Caco-2 (cell line): ENCODE measurements at regions of chr14 and their contacts with region 1.

Region 1: DNA sequence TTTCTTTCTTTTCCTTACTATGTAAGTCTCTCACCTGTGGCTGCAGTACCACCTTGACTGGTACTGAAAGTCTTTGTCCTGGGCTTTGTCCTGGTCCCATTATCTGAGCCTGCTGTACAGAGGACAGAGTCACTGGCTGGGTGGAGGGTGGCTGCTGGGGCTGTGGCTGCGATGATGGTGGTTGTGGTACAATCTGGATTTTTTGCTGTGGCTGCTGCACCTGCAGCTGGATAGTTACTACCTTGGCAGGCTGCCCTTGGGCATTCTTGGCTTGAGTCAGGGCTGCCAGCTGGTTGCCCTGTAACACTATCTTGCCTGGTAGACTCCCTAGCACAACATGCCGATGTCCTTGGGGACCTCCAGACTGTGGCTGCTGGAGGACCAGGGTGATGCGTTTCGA is 27.0 kb downstream of the CHD8 start:
- DNase-seq: no peak
- H3K4me3 ChIP-seq: no peak overlapping the region
- H3K4me3 Mint-ChIP-seq: no peak overlapping the region
- H3K27ac Mint-ChIP-seq: no peak overlapping the region
- H3K4me1 ChIP-seq: no peaks in the 10 kb centered on the region
- H3K4me1 Mint-ChIP-seq: no peaks in the 10 kb centered on the region
- H3K27me3 ChIP-seq: no peaks in the 10 kb centered on the region
- H3K27me3 Mint-ChIP-seq: no peaks in the 10 kb centered on the region
- CTCF ChIP-seq: no peak

Region 2: DNA sequence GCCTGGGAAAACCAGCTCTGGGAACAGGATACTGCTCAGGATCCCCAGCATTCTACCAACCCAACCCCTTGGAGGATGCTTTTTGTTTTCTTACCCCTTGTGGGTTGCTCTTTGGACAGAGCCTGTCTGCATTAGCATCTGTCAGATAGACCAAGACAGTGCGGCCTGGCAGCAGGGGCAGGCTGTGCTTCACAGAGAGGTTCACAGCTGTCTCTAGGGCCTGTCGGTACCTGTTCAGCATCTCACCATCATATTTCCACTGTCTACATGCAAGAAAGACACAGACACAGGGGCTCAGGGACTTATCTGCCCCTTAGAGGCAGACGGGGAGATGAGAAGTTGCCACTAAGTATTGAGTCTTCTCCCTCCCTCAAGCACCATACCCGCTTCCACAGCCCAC is 1037.4 kb before region 1 on chr14:
- CTCF ChIA-PET with region 1: interaction called, 10 read pairs
- POLR2A ChIA-PET with region 1: no interaction called
- intact Hi-C with region 1: no loop called
- DNase-seq: no peak
- H3K4me3 ChIP-seq: no peak overlapping the region
- H3K4me3 Mint-ChIP-seq: no peak overlapping the region
- H3K27ac Mint-ChIP-seq: no peak overlapping the region
- H3K4me1 ChIP-seq: no peaks in the 10 kb centered on the region
- H3K4me1 Mint-ChIP-seq: no peaks in the 10 kb centered on the region
- H3K27me3 ChIP-seq: no peaks in the 10 kb centered on the region
- H3K27me3 Mint-ChIP-seq: no peaks in the 10 kb centered on the region
- CTCF ChIP-seq: no peak

Region 3: GRCh38 chr14:21589317-21589716 is 160.4 kb after region 1 on chr14:
- CTCF ChIA-PET with region 1: no interaction called
- POLR2A ChIA-PET with region 1: no interaction called
- intact Hi-C with region 1: no loop called
- DNase-seq: no peak
- H3K4me3 ChIP-seq: no peak overlapping the region
- H3K4me3 Mint-ChIP-seq: no peak overlapping the region
- H3K27ac Mint-ChIP-seq: no peak overlapping the region
- H3K4me1 ChIP-seq: no peaks in the 10 kb centered on the region
- H3K4me1 Mint-ChIP-seq: no peaks in the 10 kb centered on the region
- H3K27me3 ChIP-seq: no peaks in the 10 kb centered on the region
- H3K27me3 Mint-ChIP-seq: peaks cover 6% of the 10 kb centered on the region
- CTCF ChIP-seq: no peak